Activated T-helper 2 cell treated with anti-CD3 and anti-CD28 coated beads, Interferon-gamma antibody, Interleukin-2, Interleukin-4, amounts not matched to agents 10 μg/mL and 5 μg/mL and 100 μg/mL, durations not matched to agents 14 hours and 24 hours and 36 hours (primary cell): ENCODE measurements at regions of chr2 and their contacts with region 1.

Region 1: GRCh38 chr2:227411320-227411989 is 23.7 kb upstream of the SCYGR1 start:
- DNase-seq: peak; percentile 18
- H3K4me3 Mint-ChIP-seq: peak overlapping the region; percentile 37
- H3K27ac Mint-ChIP-seq: peak overlapping the region; percentile 84
- H3K4me1 Mint-ChIP-seq: peaks cover 53% of the 10 kb centered on the region
- H3K27me3 Mint-ChIP-seq: no peaks in the 10 kb centered on the region

Region 2: GRCh38 chr2:227324995-227325838 is 86.2 kb before region 1 on chr2 and contains the start of gene MFF:
- intact Hi-C with region 1: loop called (anchors 2 kb)
- DNase-seq: peak; percentile 89
- H3K4me3 Mint-ChIP-seq: peak within 1 kb of the TSS; percentile 90
- H3K27ac Mint-ChIP-seq: peak within 1 kb of the TSS; percentile 90
- H3K4me1 Mint-ChIP-seq: peaks cover 31% of the 10 kb centered on the region
- H3K27me3 Mint-ChIP-seq: peaks cover 5% of the 10 kb centered on the region
- total RNA-seq, gene MFF: 74.4 and 77.3 TPM in 2 replicates

Region 3: GRCh38 chr2:227370791-227371312 is 40.6 kb before region 1 on chr2:
- intact Hi-C with region 1: loop called (anchors 5 kb)
- DNase-seq: no peak
- H3K4me3 Mint-ChIP-seq: no peak overlapping the region
- H3K27ac Mint-ChIP-seq: no peak overlapping the region
- H3K4me1 Mint-ChIP-seq: peaks cover 6% of the 10 kb centered on the region
- H3K27me3 Mint-ChIP-seq: no peaks in the 10 kb centered on the region

Region 4: DNA sequence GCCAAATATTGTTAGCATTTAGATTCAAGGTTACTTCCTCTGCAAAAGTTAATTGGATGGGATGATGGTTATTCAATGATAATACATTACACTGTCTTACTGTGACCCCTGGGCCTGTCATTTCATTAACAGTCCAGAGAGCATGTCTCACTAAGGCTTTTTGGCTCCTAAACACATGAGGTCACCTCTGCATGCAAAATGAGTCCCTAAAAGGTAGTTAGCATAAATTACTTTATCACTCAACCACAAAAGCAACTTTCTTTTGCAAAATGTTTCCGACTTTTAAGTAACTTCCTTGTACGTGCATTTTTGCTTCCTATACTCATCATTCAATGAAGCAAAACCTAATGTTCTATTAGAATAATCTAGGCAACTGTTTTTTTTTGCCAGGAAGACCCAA is 43.7 kb after region 1 on chr2:
- intact Hi-C with region 1: no loop called
- DNase-seq: no peak
- H3K4me3 Mint-ChIP-seq: no peak overlapping the region
- H3K27ac Mint-ChIP-seq: no peak overlapping the region
- H3K4me1 Mint-ChIP-seq: peaks cover 25% of the 10 kb centered on the region
- H3K27me3 Mint-ChIP-seq: no peaks in the 10 kb centered on the region

Region 5: GRCh38 chr2:227471924-227472264 is 60.4 kb after region 1 on chr2 and contains the start of gene AGFG1:
- intact Hi-C with region 1: loop called (anchors 2 kb)
- DNase-seq: peak; percentile 81
- H3K4me3 Mint-ChIP-seq: peak within 1 kb of the TSS; percentile 88
- H3K27ac Mint-ChIP-seq: peak within 1 kb of the TSS; percentile 78
- H3K4me1 Mint-ChIP-seq: peaks cover 31% of the 10 kb centered on the region
- H3K27me3 Mint-ChIP-seq: no peaks in the 10 kb centered on the region
- total RNA-seq, gene AGFG1: 137 and 139 TPM in 2 replicates

Region 6: DNA sequence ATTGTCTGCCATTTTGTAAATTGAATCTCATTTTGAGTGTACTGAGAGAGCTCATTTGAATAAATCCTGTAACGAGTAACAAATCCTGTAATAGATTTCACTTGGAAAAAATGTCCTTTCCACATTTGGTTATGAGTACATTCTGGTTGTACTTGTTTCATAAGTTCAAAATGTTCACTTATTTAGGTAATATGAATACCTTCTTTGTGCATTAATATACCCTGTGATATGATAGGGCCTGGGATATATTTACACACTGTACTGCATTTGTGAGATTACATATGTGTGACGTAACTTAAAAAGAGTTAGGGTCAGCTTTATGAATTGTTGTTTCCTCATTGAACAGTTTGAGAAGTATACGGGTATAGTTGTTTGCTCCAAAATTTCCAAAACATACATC is 76.6 kb after region 1 on chr2:
- intact Hi-C with region 1: loop called (anchors 1 kb)
- DNase-seq: no peak
- H3K4me3 Mint-ChIP-seq: no peak overlapping the region
- H3K27ac Mint-ChIP-seq: peak overlapping the region; percentile 30
- H3K4me1 Mint-ChIP-seq: peaks cover 29% of the 10 kb centered on the region
- H3K27me3 Mint-ChIP-seq: no peaks in the 10 kb centered on the region

Region 7: GRCh38 chr2:227817850-227818674 is 406.6 kb after region 1 on chr2:
- intact Hi-C with region 1: loop called (anchors 1 kb)
- DNase-seq: peak; percentile 13
- H3K4me3 Mint-ChIP-seq: no peak overlapping the region
- H3K27ac Mint-ChIP-seq: peak overlapping the region; percentile 71
- H3K4me1 Mint-ChIP-seq: peaks cover 16% of the 10 kb centered on the region
- H3K27me3 Mint-ChIP-seq: peaks cover 4% of the 10 kb centered on the region